HEK293T (cell line): ENCODE measurements at regions of chr22 and their contacts with region 1.

Region 1: DNA sequence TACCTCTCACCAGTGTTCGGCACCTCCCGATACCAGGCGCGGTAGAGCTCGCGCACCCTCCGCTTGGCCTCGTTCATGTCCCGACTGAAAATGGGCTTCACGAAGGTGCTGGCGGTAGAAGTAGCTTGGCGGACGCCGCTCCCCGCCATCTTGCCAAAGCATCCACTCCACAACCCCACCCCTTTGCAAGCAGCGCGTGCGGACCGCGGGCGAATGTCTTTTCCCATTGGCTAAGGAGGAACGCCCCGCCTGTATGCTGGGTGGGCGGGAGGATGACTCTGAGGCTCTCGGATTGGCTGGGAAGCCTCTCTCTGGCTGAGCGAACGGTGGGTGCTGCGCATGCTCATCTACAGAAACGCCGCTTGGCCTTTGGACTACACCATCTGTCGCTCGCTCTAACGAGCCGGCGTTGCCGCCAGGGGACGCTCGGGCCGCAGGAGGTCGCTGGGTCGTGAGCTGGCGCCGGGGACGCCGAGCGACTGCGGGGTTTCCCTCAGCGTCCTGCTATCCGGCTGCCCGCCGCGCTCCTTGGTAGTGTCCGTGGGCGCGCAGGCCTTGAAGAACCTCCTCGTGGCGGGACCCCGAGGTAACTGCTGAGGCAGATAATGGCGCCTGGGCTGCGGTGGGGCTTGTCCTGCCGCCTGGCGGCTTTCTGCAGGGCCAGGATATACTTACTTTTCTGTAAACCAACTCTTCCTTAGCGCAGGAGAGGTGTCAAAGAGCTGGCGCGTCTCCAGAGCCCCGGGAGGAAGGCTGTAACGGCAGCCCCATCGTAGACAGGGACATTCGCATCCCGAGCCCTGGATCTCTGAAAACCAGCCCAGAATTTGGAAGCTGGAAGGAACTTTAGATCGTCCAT is at the start of gene NDUFA6:
- DNase-seq: peak; percentile 97

Region 2: DNA sequence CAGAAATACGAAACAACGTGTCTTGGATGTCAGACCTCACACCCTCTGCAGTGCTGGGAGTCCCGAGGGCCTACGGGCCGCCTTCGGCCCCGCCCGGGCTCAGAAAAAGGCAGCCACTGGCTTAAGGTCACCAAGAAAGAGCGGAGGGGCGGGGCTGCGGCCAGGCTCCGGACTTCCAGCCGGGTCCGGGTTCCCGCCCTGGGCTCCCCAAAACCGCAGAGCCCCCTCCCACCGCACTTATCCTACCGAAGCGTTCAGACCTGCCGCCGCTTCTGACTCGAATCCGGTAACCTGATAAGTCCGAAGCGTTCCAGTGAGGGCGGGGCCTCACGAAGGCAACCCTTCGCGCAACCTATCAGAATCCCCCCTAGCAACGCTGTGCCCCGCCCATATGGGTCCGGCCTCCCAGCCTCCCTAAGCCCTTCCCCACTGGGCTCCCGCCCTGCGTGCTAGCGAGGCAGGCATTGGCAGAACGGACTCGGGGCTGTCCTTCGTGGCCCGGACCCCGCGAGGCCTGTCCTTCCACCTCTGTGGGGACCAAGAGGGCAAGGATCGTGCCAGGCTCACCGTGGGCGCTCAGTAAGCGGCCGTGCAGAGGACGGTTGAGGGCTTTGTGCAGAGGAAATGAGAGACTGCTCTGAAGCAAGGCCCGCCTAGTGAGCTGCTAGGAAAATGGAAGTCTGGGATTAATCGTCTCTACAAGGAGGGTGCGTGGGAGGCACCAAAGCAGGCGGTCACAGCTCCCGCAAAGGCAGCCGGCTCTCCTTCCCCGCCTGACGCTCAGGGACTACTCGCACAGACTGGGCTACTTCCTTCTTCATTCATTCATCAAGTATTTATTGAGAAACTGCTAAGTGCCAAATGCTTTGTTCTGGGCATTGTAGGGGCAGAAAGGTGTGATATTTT is 20.1 kb before region 1 on chr22 and contains the start of gene NAGA:
- CTCF ChIA-PET with region 1: interaction called, 3 read pairs
- POLR2A ChIA-PET with region 1: interaction called, 17 read pairs
- DNase-seq: peak; percentile 93

Region 3: DNA sequence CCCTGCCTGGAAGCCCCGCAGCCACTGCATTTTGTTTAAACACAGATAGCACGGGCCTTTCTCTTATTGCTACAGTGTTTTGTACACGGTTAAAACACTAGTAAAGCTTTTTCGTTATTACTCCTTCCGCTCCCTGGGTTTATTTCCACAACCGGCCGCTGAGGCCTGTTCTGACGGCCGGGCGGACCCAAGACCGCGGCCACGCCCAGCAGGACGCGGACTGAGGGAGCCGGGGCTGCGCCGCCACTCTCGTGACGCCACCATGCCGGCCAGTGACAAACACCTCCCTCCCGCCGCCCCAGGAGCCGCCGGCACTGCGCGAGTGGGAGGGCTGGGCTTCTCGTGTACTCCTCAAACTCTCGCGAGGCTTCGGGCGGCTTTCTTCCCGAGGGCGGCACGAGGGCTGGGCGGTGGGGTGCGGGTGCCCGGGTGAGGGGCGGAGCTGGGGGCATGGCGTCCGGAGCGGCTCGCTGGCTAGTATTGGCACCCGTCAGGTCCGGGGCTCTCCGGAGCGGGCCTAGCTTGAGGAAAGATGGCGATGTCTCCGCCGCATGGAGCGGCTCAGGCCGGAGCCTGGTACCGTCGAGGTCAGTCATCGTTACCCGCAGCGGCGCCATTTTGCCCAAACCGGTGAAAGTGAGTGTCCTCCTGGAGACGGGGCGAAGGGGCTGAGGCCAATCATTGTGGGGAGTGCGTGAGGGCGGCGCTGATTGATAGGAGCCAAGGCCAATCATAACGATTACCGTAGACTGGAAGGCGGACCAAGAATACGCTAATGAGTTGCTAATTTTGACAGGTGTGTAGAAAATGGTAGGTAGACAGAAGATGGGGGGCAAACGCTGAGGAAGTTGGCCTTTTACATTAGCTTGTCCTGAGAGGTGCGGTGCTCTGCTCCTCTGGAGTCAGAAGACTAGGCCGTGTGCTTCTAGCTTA is 11.2 kb before region 1 on chr22 and contains the start of gene SMDT1:
- CTCF ChIA-PET with region 1: interaction called, 3 read pairs
- POLR2A ChIA-PET with region 1: interaction called, 57 read pairs
- DNase-seq: peak; percentile 97

Region 4: DNA sequence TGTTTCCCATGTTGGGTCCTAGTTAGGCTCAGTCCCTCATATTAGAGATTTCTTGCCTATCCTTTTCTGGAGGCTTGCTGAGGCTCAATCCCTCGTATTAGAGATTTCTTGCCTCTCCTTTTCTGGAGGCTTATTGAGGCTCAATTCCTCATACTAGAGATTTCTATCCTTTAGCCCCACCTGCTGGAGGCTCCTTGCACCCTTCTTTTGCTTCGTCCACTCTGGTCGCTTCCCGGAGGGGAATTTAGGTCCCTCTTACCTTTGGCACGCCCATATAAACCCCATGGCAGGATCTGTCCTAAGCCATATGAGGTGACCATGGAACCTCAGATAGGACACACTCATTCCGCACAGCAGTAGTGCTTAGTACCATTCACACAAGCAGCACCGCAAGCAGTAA is 23.9 kb after region 1 on chr22:
- CTCF ChIA-PET with region 1: interaction called, 13 read pairs
- POLR2A ChIA-PET with region 1: interaction called, 6 read pairs
- DNase-seq: peak; percentile 23

Region 5: GRCh38 chr22:42419243-42419881 is 328.5 kb after region 1 on chr22:
- CTCF ChIA-PET with region 1: no interaction called
- POLR2A ChIA-PET with region 1: no interaction called
- DNase-seq: no peak

Region 6: DNA sequence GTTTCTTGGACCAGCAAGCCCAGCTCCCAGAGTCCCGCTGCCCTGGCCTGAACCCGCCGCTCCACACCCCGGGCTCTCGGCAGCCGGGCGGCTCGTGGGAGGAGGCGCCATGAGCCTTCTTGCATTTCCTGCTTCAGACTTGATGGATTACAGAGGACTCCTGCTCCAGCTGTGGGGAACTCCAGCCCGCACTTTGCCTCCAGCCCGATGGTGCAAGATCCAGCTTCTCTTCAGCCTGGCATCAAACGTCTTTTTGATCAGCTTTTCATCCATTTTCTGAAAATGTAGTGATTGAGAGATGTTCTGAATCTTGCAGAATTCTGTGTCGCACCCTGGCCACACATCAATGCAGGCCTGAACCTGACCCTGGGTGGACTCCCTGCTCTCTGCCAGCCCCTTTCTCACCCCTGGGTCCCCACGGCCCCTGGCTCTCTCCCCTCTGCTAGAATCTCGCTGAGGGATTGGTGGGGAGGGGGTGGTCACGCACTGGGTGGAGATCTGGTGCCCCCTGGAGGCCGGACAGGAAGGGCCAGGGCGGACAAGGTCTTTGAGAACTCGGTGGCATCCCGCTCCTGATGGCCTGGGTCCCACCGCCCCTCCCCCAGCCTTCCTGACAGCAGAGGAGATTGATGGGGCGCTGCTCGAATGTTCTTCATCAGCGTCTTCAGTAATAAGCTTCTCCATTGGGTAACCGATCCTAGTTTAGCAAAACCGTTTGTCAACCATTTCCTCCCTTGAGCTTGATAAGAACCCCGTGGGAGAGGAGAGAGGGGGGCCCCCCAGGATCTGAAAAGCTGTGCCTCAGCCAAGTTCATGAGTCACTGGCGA is 353.5 kb after region 1 on chr22:
- CTCF ChIA-PET with region 1: interaction called, 16 read pairs
- POLR2A ChIA-PET with region 1: interaction called, 3 read pairs
- DNase-seq: peak; percentile 85